ENCODE measurements at regions of chr1 and their contacts with region 1.

Region 1: DNA sequence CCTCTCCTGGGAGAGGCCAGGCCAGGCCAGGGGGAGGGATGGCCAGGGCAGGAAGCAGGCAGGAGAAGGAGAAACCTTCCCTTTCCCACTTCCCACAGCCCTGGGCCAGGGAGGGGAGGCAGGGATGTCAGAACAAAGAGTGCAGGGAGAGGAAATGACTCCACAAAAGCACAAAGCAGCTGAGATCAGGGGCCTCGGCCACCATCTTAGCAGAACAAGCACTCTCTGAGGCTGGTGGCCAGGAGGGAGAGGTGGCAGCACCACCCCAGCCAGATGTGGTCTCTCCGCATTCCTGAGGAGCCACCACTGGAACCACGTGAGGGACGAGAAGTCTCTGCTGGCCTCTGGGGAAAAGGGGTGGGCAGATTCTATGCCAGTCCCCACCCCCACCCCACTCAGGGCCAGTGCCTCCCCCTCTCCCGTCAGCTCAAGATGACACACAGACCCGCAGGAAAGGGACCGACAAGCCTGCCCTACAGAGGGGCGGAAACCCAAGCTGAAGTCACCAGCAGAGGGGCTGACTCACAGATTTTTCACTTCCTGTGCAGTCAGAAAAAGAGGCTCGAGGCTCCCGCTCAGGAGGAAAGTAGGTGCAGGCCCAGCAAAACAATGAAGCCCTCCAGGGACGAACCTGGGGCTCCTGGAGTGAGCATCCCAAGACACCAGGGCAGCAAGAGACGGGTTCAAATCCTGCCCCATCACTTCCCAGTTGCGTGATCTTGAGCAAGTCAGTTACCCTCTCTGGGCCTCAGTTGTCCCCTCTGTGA is 24.1 kb upstream of the ALDH4A1 start:
- DNase-seq: peak; percentile 78 to 84
- H3K4me3 ChIP-seq: peak overlapping the region; percentile 52; the same call in 1 of the 2 replicates
- H3K27ac ChIP-seq: peak overlapping the region; percentile 92
- H3K4me1 ChIP-seq: peaks cover 54% of the 10 kb centered on the region
- H3K27me3 ChIP-seq: no peaks in the 10 kb centered on the region
- CTCF ChIP-seq: no peak

Region 2: DNA sequence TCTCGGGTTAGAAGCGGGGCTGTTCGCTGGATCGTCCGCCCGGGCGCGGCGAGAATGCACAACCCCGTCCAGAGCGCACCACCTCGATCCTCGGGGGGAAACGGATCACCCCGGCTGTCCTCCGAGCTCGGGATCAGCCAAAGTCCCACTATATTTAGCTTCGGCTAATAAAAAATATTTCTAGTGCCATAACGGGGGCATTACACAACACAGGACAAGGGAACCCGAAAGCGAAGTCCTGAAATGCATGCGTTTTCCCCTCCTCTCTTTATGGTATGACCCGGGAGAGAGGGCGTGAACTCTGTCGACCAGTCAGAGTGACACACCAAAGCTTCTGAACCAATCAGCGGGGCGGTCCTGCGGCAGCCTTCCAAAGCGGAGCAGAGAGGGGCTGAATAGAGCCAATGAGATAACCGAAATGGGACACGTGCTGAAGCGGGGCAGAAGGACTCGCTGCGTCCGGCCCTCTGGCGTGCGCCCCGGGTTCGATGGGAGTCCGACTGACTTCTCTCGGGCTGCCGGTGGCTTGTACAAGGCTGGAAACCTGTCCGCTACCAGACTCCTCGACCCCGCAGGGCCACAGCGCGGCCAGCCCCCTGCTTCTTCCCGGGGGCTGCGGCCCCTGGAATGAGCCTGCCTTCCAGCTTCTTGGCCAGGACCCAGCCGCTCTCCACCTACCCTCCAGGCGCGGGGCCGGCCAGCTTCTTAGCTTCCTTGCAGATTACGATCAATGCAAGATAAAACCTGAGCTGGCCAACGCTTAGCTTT is 23.8 kb before region 1 on chr1 and contains the start of gene ALDH4A1:
- CTCF ChIA-PET with region 1: interaction called, 3 read pairs
- POLR2A ChIA-PET with region 1: interaction called, 5 read pairs
- intact Hi-C with region 1: loop called (anchors 1 kb)
- DNase-seq: peak; percentile 94 to 95
- H3K4me3 ChIP-seq: peak within 1 kb of the TSS; percentile 77
- H3K27ac ChIP-seq: peak within 1 kb of the TSS; percentile 91
- H3K4me1 ChIP-seq: peaks cover 20% of the 10 kb centered on the region
- H3K27me3 ChIP-seq: no peaks in the 10 kb centered on the region
- CTCF ChIP-seq: no peak
- total RNA-seq, gene ALDH4A1: 15.0 and 19.4 TPM in 2 replicates

Region 3: GRCh38 chr1:18941221-18942141 is 15.0 kb after region 1 on chr1:
- CTCF ChIA-PET with region 1: interaction called, 3 read pairs
- POLR2A ChIA-PET with region 1: no interaction called
- intact Hi-C with region 1: loop called (anchors 2 kb)
- DNase-seq: peak in 1 of 2 experiments; percentile 57
- H3K4me3 ChIP-seq: no peak overlapping the region
- H3K27ac ChIP-seq: no peak overlapping the region
- H3K4me1 ChIP-seq: no peaks in the 10 kb centered on the region; the same call in none of the 2 replicates
- H3K27me3 ChIP-seq: no peaks in the 10 kb centered on the region
- CTCF ChIP-seq: no peak

Region 4: DNA sequence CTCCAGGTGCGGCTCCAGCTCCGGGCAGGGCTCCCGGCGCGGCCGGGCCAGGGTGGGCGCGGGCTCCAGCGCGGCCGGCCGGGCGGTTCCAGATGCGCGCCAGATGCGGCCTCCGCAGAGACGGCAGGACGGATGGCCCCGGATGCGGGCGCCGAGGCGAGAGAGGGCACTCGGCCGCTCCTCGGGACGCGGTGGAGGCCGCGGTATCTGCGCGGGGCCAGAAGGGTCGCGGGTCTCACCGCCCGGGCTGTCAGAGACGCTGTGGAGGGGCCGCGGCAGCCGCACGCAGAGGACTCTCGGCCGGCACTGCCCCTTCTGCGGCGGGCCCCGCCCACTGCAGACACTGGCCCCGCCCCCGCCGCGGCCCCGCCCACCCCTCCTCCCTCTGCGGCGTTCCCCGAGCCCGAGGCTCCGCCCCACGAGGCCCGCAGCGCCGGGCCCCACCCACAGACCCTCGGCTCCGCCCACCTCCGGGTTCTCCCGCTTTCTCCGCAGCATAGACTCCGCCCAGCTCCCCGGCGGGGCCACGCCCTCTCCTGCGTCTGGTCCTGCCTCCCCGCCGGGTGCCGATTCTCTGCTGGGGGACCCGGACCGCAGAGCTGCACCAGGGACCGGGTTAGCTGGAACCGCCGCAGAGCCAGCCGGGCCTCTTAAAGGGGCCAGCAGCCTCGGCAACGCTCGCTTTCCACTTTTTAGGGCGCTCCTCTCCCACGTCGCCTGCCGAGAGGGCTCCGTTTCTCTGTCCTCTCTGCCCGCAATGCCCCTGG is 30.1 kb after region 1 on chr1 and contains the start of gene IFFO2:
- CTCF ChIA-PET with region 1: no interaction called
- POLR2A ChIA-PET with region 1: interaction called, 5 read pairs
- intact Hi-C with region 1: loop called (anchors 1 kb)
- DNase-seq: peak; percentile 52 to 97
- H3K4me3 ChIP-seq: peak within 1 kb of the TSS; percentile 80
- H3K27ac ChIP-seq: no peak within 1 kb of the TSS
- H3K4me1 ChIP-seq: peaks cover 20% of the 10 kb centered on the region
- H3K27me3 ChIP-seq: no peaks in the 10 kb centered on the region
- CTCF ChIP-seq: no peak
- total RNA-seq, gene IFFO2: 11.7 and 16.5 TPM in 2 replicates

Region 5: GRCh38 chr1:19062258-19063029 is 135.9 kb after region 1 on chr1:
- CTCF ChIA-PET with region 1: no interaction called
- POLR2A ChIA-PET with region 1: no interaction called
- intact Hi-C with region 1: no loop called
- DNase-seq: no peak
- H3K4me3 ChIP-seq: no peak overlapping the region
- H3K27ac ChIP-seq: no peak overlapping the region
- H3K4me1 ChIP-seq: peaks cover 18% of the 10 kb centered on the region
- H3K27me3 ChIP-seq: no peaks in the 10 kb centered on the region
- CTCF ChIP-seq: no peak

Region 6: DNA sequence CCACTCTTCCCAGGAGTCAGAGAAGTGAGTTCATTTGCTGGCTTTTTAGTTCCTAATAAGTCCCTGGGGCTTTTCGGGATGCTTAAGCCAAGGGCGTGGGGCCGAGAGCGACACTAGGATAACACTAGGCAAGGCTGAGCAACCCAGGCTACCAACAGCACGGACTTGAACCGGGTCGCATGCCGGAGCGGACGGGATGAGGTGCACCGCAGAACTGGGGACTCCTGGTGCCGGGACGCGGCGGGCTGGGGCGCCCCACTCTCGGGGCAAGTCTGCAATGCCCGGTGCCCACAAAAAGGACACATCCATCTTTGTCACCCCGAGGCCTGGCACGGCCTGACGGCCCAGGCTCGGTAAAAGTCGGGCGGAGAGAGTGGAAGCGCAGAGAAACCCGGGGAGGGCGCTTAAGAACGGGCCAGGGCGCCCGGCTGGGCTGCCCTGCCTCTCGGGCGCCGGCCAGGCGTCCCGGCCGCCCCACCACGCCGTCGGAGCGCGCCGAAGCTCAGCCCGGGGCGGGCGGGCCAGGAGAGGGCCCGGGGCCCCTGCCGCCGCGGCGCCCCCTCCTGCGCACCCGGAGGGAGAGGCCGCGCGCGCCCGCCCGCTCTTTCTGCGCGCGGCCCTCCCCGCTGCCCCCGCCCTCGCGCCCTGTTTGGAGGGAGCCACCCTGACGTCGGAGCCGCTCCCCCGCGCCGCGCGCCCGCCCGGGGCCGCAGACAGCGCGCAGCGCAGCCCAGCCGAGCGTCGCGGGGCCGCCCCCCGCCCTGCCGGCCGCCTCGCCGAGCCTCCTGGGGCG is 717.3 kb after region 1 on chr1 and contains the start of gene NBL1:
- CTCF ChIA-PET with region 1: no interaction called
- POLR2A ChIA-PET with region 1: no interaction called
- intact Hi-C with region 1: no loop called
- DNase-seq: peak in 1 of 2 experiments; percentile 45
- H3K4me3 ChIP-seq: peak within 1 kb of the TSS; percentile 66
- H3K27ac ChIP-seq: no peak within 1 kb of the TSS
- H3K4me1 ChIP-seq: peaks cover 35% of the 10 kb centered on the region
- H3K27me3 ChIP-seq: no peaks in the 10 kb centered on the region
- CTCF ChIP-seq: no peak
- total RNA-seq, gene NBL1: 32.5 and 36.9 TPM in 2 replicates

Region 7: DNA sequence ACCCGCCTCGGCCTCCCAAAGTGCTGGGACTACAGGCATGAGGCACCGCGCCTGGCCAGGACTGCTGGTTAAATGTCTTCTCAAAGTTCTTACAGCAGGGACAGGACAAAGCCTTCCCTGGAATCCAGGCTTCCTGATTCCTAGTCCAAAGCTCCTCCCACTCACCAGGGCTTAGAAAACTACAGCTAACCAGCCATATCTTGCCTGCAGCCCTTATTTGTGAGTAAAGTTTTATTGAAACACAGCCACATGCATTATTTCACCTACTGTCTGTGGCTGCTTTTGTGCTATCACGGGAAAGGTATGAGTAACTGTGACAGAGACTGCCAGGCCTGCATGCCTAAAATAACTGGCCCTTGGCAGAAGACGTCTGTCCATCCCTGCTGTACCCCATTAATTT is 848.8 kb after region 1 on chr1:
- CTCF ChIA-PET with region 1: no interaction called
- POLR2A ChIA-PET with region 1: no interaction called
- intact Hi-C with region 1: no loop called
- DNase-seq: no peak
- H3K4me3 ChIP-seq: no peak overlapping the region
- H3K27ac ChIP-seq: no peak overlapping the region
- H3K4me1 ChIP-seq: no peaks in the 10 kb centered on the region; the same call in 1 of the 2 replicates
- H3K27me3 ChIP-seq: no peaks in the 10 kb centered on the region
- CTCF ChIP-seq: no peak